CD8-positive, alpha-beta T cell (primary cell): ENCODE measurements at regions of chr2 and their contacts with region 1.

Region 1: DNA sequence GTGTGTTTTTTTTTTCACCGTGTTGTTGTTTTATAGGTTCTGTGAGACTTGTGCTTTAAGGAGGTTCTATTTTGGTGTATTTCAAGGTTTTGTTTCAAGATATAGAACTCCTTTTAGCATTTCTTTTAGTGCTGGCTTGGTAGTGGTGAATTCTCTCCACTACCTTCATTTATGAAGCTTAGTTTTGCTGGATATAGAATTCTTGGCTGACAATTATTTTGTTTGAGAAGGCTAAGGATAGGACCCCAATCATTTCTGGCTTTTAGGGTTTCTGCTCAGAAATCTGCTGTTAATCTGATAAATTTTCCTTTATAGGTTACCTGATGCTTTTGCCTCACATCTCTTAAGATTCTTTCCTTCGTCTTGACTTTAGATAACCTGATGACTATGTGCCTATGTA is 66.8 kb downstream of the MSTN start:
- DNase-seq: no peak
- ATAC-seq: no peak
- H3K4me3 ChIP-seq: no peak overlapping the region
- H3K4me3 Mint-ChIP-seq: no peak overlapping the region
- H3K27ac ChIP-seq: no peak overlapping the region
- H3K27ac Mint-ChIP-seq: no peak overlapping the region
- H3K4me1 ChIP-seq: no peaks in the 10 kb centered on the region
- H3K4me1 Mint-ChIP-seq: no peaks in the 10 kb centered on the region
- H3K27me3 ChIP-seq: no peaks in the 10 kb centered on the region
- H3K27me3 Mint-ChIP-seq: peaks cover 3% of the 10 kb centered on the region
- CTCF ChIP-seq: no peak

Region 2: DNA sequence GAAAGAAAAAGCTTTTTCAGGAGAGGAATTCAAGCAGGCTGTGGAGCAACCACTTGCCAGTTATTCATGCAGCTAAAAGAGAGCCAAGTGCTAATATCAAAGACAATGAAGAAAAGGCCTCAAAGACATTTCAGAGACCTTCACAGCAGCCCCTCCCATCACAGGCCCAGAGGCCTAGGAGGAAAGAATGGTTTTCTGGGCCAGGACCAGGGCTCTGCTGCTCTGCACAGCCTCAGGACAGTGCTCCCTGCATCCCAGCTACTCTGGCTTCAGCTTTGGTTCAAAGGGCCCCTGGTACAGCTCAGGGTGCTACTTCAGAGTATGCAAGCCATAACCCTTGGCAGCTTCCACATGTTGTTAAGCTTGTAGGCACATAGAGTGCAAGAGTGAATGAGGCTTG is 52.7 kb before region 1 on chr2:
- CTCF ChIA-PET with region 1: no interaction called
- POLR2A ChIA-PET with region 1: no interaction called
- intact Hi-C with region 1: loop called in 1 of 2 experiments (anchors 2 kb)
- DNase-seq: no peak
- ATAC-seq: no peak
- H3K4me3 ChIP-seq: no peak overlapping the region
- H3K4me3 Mint-ChIP-seq: no peak overlapping the region
- H3K27ac ChIP-seq: no peak overlapping the region
- H3K27ac Mint-ChIP-seq: no peak overlapping the region
- H3K4me1 ChIP-seq: no peaks in the 10 kb centered on the region
- H3K4me1 Mint-ChIP-seq: no peaks in the 10 kb centered on the region
- H3K27me3 ChIP-seq: no peaks in the 10 kb centered on the region
- H3K27me3 Mint-ChIP-seq: no peaks in the 10 kb centered on the region
- CTCF ChIP-seq: no peak

Region 3: DNA sequence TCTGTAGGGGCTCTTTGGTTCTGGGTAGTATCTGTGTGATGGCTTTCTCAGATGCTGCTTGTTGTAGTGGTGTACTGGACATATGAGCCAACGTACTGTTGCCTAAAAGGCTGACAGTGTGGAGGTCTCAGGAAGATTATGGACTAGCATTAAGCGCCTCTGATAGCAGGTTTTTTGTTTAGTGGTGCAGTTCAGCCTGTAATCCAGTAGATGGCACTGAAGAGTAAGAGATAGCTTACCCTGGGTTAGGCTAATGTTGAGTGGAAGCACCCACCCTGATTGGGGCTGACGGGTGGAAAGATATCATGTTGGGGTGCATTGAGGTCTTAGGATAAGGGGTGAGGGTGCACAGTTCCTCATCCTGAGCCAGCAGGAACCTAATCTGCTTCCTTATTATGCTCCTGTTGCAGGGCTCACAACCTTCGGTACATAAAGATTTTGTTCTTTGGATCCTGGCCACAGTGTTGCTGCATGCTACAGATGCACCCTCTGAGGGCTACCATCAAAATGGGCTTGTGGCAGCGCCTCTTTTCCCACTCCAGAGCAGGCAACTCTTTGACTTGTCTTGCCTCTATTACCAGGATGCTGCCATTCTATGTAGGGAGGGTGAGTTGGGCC is 12.8 kb before region 1 on chr2:
- CTCF ChIA-PET with region 1: no interaction called
- POLR2A ChIA-PET with region 1: no interaction called
- intact Hi-C with region 1: no loop called
- DNase-seq: no peak
- ATAC-seq: no peak
- H3K4me3 ChIP-seq: no peak overlapping the region
- H3K4me3 Mint-ChIP-seq: no peak overlapping the region
- H3K27ac ChIP-seq: no peak overlapping the region
- H3K27ac Mint-ChIP-seq: no peak overlapping the region
- H3K4me1 ChIP-seq: no peaks in the 10 kb centered on the region
- H3K4me1 Mint-ChIP-seq: no peaks in the 10 kb centered on the region
- H3K27me3 ChIP-seq: no peaks in the 10 kb centered on the region
- H3K27me3 Mint-ChIP-seq: peaks cover 5% of the 10 kb centered on the region
- CTCF ChIP-seq: peak; percentile 14

Region 4: GRCh38 chr2:190017837-190018236 is 22.2 kb after region 1 on chr2:
- CTCF ChIA-PET with region 1: no interaction called
- POLR2A ChIA-PET with region 1: no interaction called
- intact Hi-C with region 1: no loop called
- DNase-seq: no peak
- ATAC-seq: no peak
- H3K4me3 ChIP-seq: no peak overlapping the region
- H3K4me3 Mint-ChIP-seq: no peak overlapping the region
- H3K27ac ChIP-seq: no peak overlapping the region
- H3K27ac Mint-ChIP-seq: no peak overlapping the region
- H3K4me1 ChIP-seq: no peaks in the 10 kb centered on the region
- H3K4me1 Mint-ChIP-seq: no peaks in the 10 kb centered on the region
- H3K27me3 ChIP-seq: peaks cover 0 to 2% of the 10 kb centered on the region in 2 experiments
- H3K27me3 Mint-ChIP-seq: peaks cover 15% of the 10 kb centered on the region
- CTCF ChIP-seq: no peak